ENCODE measurements at regions of chr16 and their contacts with region 1.

Region 1: DNA sequence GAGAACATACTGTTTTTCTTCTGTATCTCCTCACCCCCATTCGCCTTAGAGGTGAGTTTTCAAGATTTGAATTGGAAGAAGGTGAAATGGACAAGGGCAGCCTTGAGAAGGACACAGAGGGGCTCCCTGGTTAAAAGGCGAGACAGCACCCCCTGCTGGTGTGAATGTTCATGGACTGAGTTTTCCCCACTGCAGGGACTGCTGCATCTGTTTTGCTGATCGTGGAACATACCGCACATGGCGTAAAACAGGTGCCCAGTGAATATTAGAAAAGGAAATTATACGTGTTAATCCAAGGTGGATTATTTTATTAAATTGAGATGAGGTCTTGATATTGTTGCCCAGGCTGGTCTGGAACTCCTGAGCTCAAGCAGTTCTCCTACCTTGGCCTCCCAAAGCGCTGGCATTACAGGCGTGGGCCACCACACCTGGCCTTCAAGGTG is 54.5 kb downstream of the NDE1 start:
- DNase-seq: peak; percentile 58 to 84 (median 70)
- ATAC-seq: peak; percentile 76
- H3K4me3 ChIP-seq: no peak overlapping the region
- H3K4me3 Mint-ChIP-seq: no peak overlapping the region
- H3K27ac ChIP-seq: no peak overlapping the region
- H3K27ac Mint-ChIP-seq: peak overlapping the region; percentile 72
- H3K4me1 ChIP-seq: peaks cover 7% of the 10 kb centered on the region
- H3K4me1 Mint-ChIP-seq: peaks cover 18% of the 10 kb centered on the region
- H3K27me3 ChIP-seq: no peaks in the 10 kb centered on the region
- H3K27me3 Mint-ChIP-seq: no peaks in the 10 kb centered on the region
- CTCF ChIP-seq: peak; percentile 88

Region 2: DNA sequence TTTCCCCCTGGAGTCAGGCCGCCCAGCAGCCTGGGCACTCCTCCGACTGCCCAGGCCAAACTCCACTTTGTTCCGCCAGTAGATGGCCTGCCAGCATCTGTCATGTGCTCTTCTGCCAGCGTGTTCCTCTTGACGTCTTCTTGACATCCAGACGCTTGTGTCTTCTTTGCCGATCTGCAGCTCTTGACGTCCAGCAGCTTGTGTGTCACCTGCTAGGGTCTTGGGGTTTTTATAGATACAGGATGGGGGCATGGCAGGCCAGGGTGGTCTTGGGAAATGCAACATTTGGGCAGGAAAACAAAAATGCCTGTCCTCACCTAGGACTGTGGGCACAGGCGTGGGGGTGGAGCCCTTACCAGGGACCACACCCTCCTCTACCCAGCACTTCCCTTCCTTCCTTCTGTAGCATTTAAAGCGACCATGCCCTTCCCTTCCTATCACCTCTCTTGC is 181.4 kb before region 1 on chr16:
- CTCF ChIA-PET with region 1: no interaction called
- POLR2A ChIA-PET with region 1: no interaction called
- intact Hi-C with region 1: loop called in 1 of 2 experiments (anchors 2 kb)
- DNase-seq: peak in 4 of 14 experiments; percentile 5 to 50 (median 22)
- ATAC-seq: no peak
- H3K4me3 ChIP-seq: no peak overlapping the region
- H3K4me3 Mint-ChIP-seq: no peak overlapping the region
- H3K27ac ChIP-seq: no peak overlapping the region
- H3K27ac Mint-ChIP-seq: no peak overlapping the region
- H3K4me1 ChIP-seq: peaks cover 12% of the 10 kb centered on the region
- H3K4me1 Mint-ChIP-seq: peaks cover 10% of the 10 kb centered on the region
- H3K27me3 ChIP-seq: no peaks in the 10 kb centered on the region
- H3K27me3 Mint-ChIP-seq: no peaks in the 10 kb centered on the region
- CTCF ChIP-seq: no peak